ENCODE measurements at regions of chr1 and their contacts with region 1.

Region 1: DNA sequence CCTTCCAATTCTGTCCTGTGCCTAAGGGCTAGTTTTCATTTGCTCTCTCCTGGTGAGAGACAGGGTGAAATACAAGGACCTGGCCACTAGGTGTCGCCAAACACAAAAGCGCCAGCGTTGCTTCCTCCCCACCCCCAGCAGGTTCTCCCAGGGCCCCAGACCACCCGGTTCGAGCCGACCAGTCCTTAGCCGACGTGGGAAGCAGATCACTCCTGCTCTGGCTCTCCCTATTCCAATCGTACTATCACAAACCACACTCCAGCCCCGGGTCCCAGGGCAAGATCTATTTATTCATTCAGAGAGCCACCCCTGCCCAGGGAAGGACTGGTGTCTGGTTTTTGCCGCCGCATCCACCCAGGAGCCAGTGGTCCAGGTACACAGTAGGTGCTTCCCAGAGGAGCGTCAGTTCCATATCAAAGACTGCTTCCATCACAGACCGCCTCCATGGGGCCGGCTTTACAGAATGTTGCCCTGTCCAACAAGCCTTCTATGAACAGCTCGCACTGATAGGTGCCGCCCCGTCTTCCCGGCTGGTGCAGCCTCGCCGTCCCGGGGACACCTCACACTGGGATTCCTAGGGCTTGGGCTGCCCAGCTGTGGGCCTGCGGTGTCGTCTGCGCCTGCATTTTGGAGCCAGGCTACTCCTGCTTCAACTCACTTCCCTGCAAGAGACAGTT is 35.0 kb downstream of the CTNNBIP1 start:
- DNase-seq: peak; percentile 75 to 89
- ATAC-seq: peak; percentile 89
- H3K4me3 ChIP-seq: no peak overlapping the region
- H3K27ac ChIP-seq: peak overlapping the region in 1 of 2 donors; percentile 14
- H3K4me1 ChIP-seq: peaks cover 0 to 2% of the 10 kb centered on the region in 2 donors
- H3K27me3 ChIP-seq: no peaks in the 10 kb centered on the region

Region 2: GRCh38 chr1:9825454-9826090 is 49.5 kb before region 1 on chr1:
- intact Hi-C with region 1: no loop called
- DNase-seq: peak; percentile 65 to 87
- ATAC-seq: peak; percentile 62
- H3K4me3 ChIP-seq: no peak overlapping the region
- H3K27ac ChIP-seq: peak overlapping the region in 1 of 2 donors; percentile 43
- H3K4me1 ChIP-seq: no peaks in the 10 kb centered on the region
- H3K27me3 ChIP-seq: peaks cover 0 to 2% of the 10 kb centered on the region in 2 donors

Region 3: GRCh38 chr1:10338047-10338446 is 462.9 kb after region 1 on chr1:
- intact Hi-C with region 1: loop called in 1 of 2 experiments (anchors 5 kb)
- DNase-seq: no peak
- ATAC-seq: peak; percentile 63
- H3K4me3 ChIP-seq: no peak overlapping the region
- H3K27ac ChIP-seq: no peak overlapping the region
- H3K4me1 ChIP-seq: no peaks in the 10 kb centered on the region
- H3K27me3 ChIP-seq: no peaks in the 10 kb centered on the region